HCT116 (cell line): ENCODE measurements at regions of chr9 and their contacts with region 1.

Region 1: DNA sequence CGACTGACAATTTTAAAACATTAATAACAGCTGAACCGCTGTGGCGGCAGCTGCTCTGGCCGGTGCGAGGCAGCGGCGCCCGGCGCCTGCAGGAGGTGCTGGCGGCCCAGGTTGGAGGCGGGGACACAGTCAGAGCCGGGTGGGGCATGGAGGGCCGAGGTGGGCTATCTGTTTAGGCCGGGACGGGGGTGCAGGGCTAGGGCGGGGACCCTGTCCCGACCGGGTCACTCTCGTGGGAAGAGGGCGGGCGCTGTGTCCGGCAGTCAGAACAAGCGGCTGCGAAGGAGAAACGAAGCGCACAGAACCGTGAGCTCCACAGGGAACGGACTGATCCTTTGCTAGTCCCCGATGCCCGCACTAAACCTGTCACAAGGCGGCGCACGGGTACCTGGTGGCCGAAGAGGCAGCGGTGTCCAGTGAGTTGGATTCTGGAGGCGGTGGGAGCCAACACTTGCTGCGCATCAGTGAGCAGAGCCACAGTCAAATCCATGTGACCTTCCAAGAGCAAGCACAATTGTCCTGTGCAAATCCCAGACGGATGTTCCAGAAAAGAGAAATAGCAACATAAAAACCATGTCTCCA is 13.7 kb upstream of the ALDOB start:
- DNase-seq: peak; percentile 83
- ATAC-seq: peak; percentile 98
- H3K4me3 ChIP-seq: peak overlapping the region; percentile 48 to 60
- H3K27ac ChIP-seq: peak overlapping the region; percentile 51; the same call in 1 of the 2 replicates
- H3K4me1 ChIP-seq: peaks cover 0 to 6% of the 10 kb centered on the region in 2 experiments; a peak in 2 of 4 replicates
- H3K27me3 ChIP-seq: no peaks in the 10 kb centered on the region
- CTCF ChIP-seq: peak; percentile 57 to 96 (median 72)
- POLR2A ChIP-seq: no peak
- RAD21 ChIP-seq: peak; percentile 67

Region 2: DNA sequence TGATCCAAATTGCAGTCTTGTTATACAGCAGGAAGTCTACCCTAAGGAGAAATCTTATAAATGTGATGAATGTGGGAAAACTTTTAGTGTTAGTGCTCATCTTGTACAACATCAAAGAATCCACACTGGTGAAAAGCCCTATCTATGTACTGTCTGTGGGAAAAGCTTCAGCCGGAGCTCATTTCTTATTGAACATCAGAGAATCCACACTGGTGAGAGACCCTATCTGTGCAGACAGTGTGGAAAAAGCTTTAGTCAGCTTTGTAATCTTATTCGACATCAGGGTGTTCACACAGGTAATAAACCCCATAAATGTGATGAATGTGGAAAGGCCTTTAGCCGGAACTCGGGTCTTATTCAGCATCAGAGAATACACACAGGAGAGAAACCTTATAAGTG is 40.2 kb before region 1 on chr9:
- CTCF ChIA-PET with region 1: no interaction called
- POLR2A ChIA-PET with region 1: no interaction called
- RAD21 ChIA-PET with region 1: no interaction called
- intact Hi-C with region 1: no loop called
- DNase-seq: no peak
- ATAC-seq: no peak
- H3K4me3 ChIP-seq: no peak overlapping the region
- H3K27ac ChIP-seq: no peak overlapping the region
- H3K4me1 ChIP-seq: no peaks in the 10 kb centered on the region
- H3K27me3 ChIP-seq: no peaks in the 10 kb centered on the region
- CTCF ChIP-seq: no peak
- POLR2A ChIP-seq: no peak
- RAD21 ChIP-seq: no peak

Region 3: GRCh38 chr9:101465392-101465791 is 16.2 kb after region 1 on chr9:
- CTCF ChIA-PET with region 1: interaction called, 18 read pairs
- POLR2A ChIA-PET with region 1: interaction called, 4 read pairs
- RAD21 ChIA-PET with region 1: interaction called, 3 read pairs
- intact Hi-C with region 1: no loop called
- DNase-seq: peak; percentile 83
- ATAC-seq: peak; percentile 99
- H3K4me3 ChIP-seq: no peak overlapping the region
- H3K27ac ChIP-seq: no peak overlapping the region
- H3K4me1 ChIP-seq: peaks cover 16 to 27% of the 10 kb centered on the region in 2 experiments; a peak in 3 of 4 replicates
- H3K27me3 ChIP-seq: no peaks in the 10 kb centered on the region
- CTCF ChIP-seq: peak; percentile 63 to 83 (median 64); a peak in 5 of 6 replicates
- POLR2A ChIP-seq: no peak
- RAD21 ChIP-seq: peak; percentile 67

Region 4: GRCh38 chr9:101727612-101728524 is 278.6 kb after region 1 on chr9:
- CTCF ChIA-PET with region 1: interaction called, 3 read pairs
- POLR2A ChIA-PET with region 1: no interaction called
- RAD21 ChIA-PET with region 1: no interaction called
- intact Hi-C with region 1: loop called (anchors 10 kb)
- DNase-seq: no peak
- ATAC-seq: peak; percentile 81
- H3K4me3 ChIP-seq: no peak overlapping the region
- H3K27ac ChIP-seq: no peak overlapping the region
- H3K4me1 ChIP-seq: no peaks in the 10 kb centered on the region
- H3K27me3 ChIP-seq: no peaks in the 10 kb centered on the region
- CTCF ChIP-seq: peak; percentile 24 to 63 (median 61); a peak in 4 of 6 replicates
- POLR2A ChIP-seq: no peak
- RAD21 ChIP-seq: peak; percentile 45